Activated CD4-positive, alpha-beta memory T cell treated with anti-CD3 and anti-CD28 coated beads for 36 hours (primary cell): ENCODE measurements at regions of chr4 and their contacts with region 1.

Region 1: GRCh38 chr4:48047421-48047844 is 30.9 kb downstream of the NIPAL1 start:
- DNase-seq: peak; percentile 91
- H3K4me3 Mint-ChIP-seq: no peak overlapping the region
- H3K27ac Mint-ChIP-seq: peak overlapping the region; percentile 15
- H3K4me1 Mint-ChIP-seq: peaks cover 52% of the 10 kb centered on the region
- H3K27me3 Mint-ChIP-seq: peaks cover 34% of the 10 kb centered on the region

Region 2: GRCh38 chr4:48002267-48002666 is 45.2 kb before region 1 on chr4:
- CTCF ChIA-PET with region 1: interaction called, 15 read pairs
- POLR2A ChIA-PET with region 1: no interaction called
- intact Hi-C with region 1: no loop called
- DNase-seq: no peak
- H3K4me3 Mint-ChIP-seq: no peak overlapping the region
- H3K27ac Mint-ChIP-seq: no peak overlapping the region
- H3K4me1 Mint-ChIP-seq: no peaks in the 10 kb centered on the region
- H3K27me3 Mint-ChIP-seq: peaks cover 6% of the 10 kb centered on the region

Region 3: GRCh38 chr4:48016141-48017103 is 31.0 kb before region 1 on chr4 and contains the starts of genes CNGA1 and NIPAL1:
- CTCF ChIA-PET with region 1: interaction called, 5 read pairs
- POLR2A ChIA-PET with region 1: interaction called, 3 read pairs
- intact Hi-C with region 1: loop called (anchors 1 kb)
- DNase-seq: peak; percentile 70
- H3K4me3 Mint-ChIP-seq: peak within 1 kb of the TSS; percentile 73
- H3K27ac Mint-ChIP-seq: no peak within 1 kb of the TSS
- H3K4me1 Mint-ChIP-seq: peaks cover 21% of the 10 kb centered on the region
- H3K27me3 Mint-ChIP-seq: peaks cover 25% of the 10 kb centered on the region
- total RNA-seq, gene CNGA1: 0.70 TPM in 1 of 2 experiments, not detected in the other
- total RNA-seq, gene NIPAL1: 1.3 to 1.9 TPM

Region 4: DNA sequence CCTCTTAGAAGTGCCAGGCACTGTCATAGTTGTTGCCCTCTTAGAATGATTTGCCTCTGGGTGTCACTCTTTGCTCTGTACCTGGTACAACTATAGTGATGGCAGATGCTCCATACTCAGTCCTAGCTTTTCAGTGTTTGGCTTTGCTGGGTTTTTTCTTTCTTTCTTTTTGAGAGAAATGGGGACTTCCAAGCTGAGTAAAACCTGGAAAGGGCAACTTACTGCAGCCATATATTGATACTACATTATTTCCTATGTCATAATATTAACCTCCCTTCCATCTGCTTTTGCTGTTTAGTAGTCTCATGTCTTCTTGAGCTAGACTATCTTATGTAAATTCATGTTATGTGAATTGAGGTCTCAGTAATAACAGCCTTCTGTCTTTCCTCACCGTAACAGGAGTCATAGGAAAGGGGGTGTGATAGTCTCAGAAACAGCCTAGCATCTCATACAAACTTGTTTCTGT is 18.2 kb after region 1 on chr4:
- CTCF ChIA-PET with region 1: interaction called, 8 read pairs
- POLR2A ChIA-PET with region 1: interaction called, 6 read pairs
- intact Hi-C with region 1: loop called (anchors 1 kb)
- DNase-seq: peak; percentile 20
- H3K4me3 Mint-ChIP-seq: no peak overlapping the region
- H3K27ac Mint-ChIP-seq: no peak overlapping the region
- H3K4me1 Mint-ChIP-seq: peaks cover 21% of the 10 kb centered on the region
- H3K27me3 Mint-ChIP-seq: no peaks in the 10 kb centered on the region